ENCODE measurements at regions of chr16 and their contacts with region 1.

Region 1: GRCh38 chr16:84754353-84754856 is 54.6 kb downstream of the USP10 start:
- DNase-seq: peak; percentile 67
- H3K4me3 Mint-ChIP-seq: peak overlapping the region; percentile 60
- H3K27ac Mint-ChIP-seq: no peak overlapping the region
- H3K4me1 Mint-ChIP-seq: peaks cover 76% of the 10 kb centered on the region
- H3K27me3 Mint-ChIP-seq: no peaks in the 10 kb centered on the region

Region 2: GRCh38 chr16:84672276-84673202 is 81.9 kb before region 1 on chr16:
- intact Hi-C with region 1: no loop called
- DNase-seq: peak; percentile 66
- H3K4me3 Mint-ChIP-seq: no peak overlapping the region
- H3K27ac Mint-ChIP-seq: no peak overlapping the region
- H3K4me1 Mint-ChIP-seq: peaks cover 8% of the 10 kb centered on the region
- H3K27me3 Mint-ChIP-seq: peaks cover 14% of the 10 kb centered on the region

Region 3: DNA sequence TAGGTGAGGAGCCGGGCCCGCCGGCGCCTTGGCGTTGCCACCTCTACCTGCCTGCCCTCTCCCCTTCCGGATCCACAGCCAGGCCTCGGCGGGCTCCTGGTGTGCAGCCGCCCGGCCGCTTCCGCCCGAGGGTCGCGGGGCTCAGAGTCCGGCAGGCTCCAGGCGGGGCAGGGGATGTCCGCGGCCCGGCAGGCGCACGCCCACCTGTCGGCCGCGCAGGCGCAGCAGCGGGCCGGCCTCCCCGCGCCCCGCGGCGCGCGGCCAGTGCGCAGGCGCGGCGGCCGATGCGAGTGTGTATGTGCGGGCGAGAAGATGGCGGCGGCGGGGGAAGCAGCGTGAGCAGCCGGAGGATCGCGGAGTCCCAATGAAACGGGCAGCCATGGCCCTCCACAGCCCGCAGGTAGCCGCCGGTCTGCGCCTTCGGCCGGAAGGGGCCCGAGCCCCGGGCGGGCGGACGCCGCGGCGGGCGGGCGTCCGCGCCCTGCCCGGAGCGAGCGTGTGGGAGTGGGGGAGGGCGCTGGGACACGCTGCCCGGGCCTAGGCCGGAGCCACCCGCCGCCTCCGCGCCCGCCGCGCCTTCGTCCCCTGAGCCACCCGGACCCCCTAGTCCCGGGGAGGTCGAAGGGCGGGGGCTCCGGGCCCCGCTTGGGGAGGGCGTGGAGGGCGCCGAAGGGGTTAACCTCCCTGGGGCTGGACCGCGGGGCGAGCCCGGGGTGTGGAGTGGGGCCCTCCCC is 54.5 kb before region 1 on chr16 and contains the start of gene USP10:
- intact Hi-C with region 1: loop called (anchors 1 kb)
- DNase-seq: peak; percentile 84
- H3K4me3 Mint-ChIP-seq: peak within 1 kb of the TSS; percentile 99
- H3K27ac Mint-ChIP-seq: peak within 1 kb of the TSS; percentile 96
- H3K4me1 Mint-ChIP-seq: peaks cover 38% of the 10 kb centered on the region
- H3K27me3 Mint-ChIP-seq: peaks cover 4% of the 10 kb centered on the region
- total RNA-seq, gene USP10: 153 and 159 TPM in 2 replicates

Region 4: DNA sequence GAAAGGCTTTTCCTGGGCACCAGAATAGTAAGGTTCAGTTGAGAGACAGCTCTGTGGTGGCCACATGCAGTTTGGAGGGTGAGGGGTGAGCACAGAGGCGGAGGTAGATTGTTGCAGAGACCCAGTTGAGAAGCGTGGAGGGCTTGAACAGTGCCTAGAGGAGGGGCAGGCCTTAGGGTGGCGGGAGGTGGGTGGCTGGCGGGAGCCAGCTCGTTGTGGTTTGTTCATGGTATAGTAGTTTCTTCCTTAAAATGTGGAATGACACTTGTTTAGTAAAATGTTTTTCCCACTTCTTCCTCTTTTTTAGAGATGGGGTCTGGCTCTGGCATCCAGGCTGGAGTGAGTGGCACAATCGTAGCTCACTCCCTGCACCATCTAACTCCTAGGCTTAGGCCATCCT is 40.4 kb before region 1 on chr16:
- intact Hi-C with region 1: no loop called
- DNase-seq: no peak
- H3K4me3 Mint-ChIP-seq: no peak overlapping the region
- H3K27ac Mint-ChIP-seq: no peak overlapping the region
- H3K4me1 Mint-ChIP-seq: peaks cover 55% of the 10 kb centered on the region
- H3K27me3 Mint-ChIP-seq: no peaks in the 10 kb centered on the region

Region 5: DNA sequence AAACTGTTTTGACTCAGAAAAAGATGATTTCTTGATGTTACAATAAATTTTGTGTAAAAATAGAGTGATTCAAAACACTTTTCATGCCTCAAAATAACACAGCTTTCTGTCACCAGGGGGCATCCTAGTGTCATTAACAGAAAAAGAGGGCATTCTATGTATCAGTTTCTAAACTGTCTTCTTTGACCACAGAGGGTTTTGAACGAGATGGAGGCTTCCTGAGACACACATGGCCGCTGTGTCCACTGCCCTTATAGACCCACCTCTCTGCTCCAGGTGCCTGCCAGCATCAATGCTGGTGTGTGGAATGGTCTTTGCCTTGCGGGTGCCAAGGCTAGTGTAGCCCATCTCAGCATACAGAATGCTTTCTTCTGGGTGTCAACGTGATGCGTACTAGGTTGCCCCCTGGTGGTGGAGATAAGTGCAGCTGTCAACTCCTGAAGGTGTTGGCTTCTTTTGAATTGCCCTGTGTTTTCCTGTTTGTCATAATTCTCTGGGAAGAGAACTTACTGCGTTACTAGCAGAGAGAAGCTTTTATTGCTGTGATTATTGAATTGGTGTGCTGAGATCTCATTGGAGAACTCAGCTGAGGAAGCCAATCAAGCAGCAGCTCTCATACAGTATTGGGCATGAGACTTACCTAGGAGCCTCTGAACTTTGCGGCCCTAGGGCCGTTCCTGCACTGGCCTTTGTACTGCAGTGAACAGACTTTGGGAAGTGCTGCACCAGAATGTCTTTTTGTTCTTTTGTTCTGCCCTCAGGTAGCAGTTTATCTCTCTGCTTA is 16.0 kb before region 1 on chr16:
- intact Hi-C with region 1: loop called (anchors 1 kb)
- DNase-seq: peak; percentile 62
- H3K4me3 Mint-ChIP-seq: peak overlapping the region; percentile 25
- H3K27ac Mint-ChIP-seq: no peak overlapping the region
- H3K4me1 Mint-ChIP-seq: peaks cover 59% of the 10 kb centered on the region
- H3K27me3 Mint-ChIP-seq: no peaks in the 10 kb centered on the region

Region 6: DNA sequence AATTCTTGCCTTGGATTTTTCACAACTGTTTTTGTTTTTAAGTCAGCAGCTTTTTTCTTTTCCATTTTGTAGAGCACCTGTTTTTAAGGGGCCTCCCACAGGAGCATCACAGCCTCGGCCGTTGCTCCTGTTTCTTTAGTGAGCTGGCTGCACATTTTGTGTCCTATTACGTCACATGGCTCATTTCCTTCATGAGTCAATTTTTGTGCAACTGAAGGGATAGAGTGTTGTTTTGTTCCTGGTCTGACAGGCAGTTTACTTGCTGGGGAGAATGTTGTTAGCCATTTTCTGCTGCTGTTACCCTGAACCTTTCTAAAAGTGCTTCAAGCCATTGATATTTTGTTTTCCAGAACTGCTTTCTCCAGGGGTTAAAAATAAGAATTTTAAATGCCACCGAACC is 20.4 kb after region 1 on chr16:
- intact Hi-C with region 1: no loop called
- DNase-seq: no peak
- H3K4me3 Mint-ChIP-seq: no peak overlapping the region
- H3K27ac Mint-ChIP-seq: no peak overlapping the region
- H3K4me1 Mint-ChIP-seq: peaks cover 4% of the 10 kb centered on the region
- H3K27me3 Mint-ChIP-seq: no peaks in the 10 kb centered on the region

Region 7: GRCh38 chr16:84952335-84953189 is 198.2 kb after region 1 on chr16:
- intact Hi-C with region 1: loop called (anchors 1 kb)
- DNase-seq: peak; percentile 55
- H3K4me3 Mint-ChIP-seq: no peak overlapping the region
- H3K27ac Mint-ChIP-seq: no peak overlapping the region
- H3K4me1 Mint-ChIP-seq: no peaks in the 10 kb centered on the region
- H3K27me3 Mint-ChIP-seq: no peaks in the 10 kb centered on the region

Region 8: GRCh38 chr16:85055503-85056210 is 301.3 kb after region 1 on chr16:
- intact Hi-C with region 1: loop called (anchors 2 kb)
- DNase-seq: peak; percentile 75
- H3K4me3 Mint-ChIP-seq: peak overlapping the region; percentile 60
- H3K27ac Mint-ChIP-seq: peak overlapping the region; percentile 84
- H3K4me1 Mint-ChIP-seq: peaks cover 31% of the 10 kb centered on the region
- H3K27me3 Mint-ChIP-seq: peaks cover 10% of the 10 kb centered on the region

Measured in activated T-helper 1 cell treated with anti-CD3 and anti-CD28 coated beads, Interleukin-12 subunit alpha, Interleukin-12 subunit beta, Interleukin-2, Interleukin-4 antibody, amounts not matched to agents 30 ng/mL and 10 ng/mL and 1 ng/mL, durations not matched to agents 14 hours and 24 hours and 36 hours (primary cell).